Sciatic nerve (tissue), 2 donors: ENCODE measurements at regions of chr9 and their contacts with region 1.

Region 1: DNA sequence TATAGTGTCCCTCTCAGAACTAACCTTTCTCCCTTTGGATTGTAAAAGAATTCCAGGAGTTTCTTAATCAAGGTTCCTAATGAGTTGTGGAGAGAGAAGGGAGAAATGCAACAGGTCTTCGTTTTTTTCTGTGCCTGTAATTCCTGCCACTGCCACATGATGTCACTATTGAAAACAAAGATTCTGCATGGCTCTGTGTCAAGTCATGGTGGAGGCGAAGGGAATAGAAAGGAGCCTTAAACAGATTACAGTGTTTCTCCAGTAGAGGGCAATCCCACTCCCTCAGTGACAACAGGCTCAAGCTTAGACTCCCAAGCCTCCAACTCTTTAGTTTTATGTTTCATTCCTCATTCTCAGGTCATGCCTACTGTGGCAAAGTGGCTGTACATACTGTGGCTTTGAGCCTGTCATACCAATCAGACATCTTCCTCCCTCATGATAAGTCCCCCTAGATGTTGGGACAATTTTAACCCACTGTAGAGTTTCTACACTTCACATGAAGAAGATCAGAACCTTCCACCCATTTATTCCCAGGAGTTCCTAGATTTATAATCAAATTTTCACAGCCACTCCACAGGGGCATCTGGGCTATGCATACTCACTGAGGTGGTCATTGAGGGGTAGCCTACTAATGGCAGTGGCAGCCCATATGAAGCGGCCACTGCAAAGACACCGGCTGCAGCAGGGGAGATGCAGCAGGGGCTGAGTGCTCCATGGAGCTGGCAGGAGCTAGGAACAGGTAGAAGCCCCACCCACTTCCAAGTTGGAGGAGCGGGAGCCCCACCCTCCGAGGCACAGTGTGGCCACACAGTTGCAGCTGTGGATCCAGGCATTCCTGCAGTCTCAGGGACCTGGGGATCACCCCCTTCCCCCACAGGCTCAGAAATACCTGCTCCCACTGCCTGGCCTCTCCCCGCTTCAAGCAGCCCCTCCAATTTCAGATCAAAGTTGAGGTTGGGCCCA is 97.4 kb upstream of the TRIM32 start:
- DNase-seq: no peak
- ATAC-seq: peak; percentile 45

Region 2: GRCh38 chr9:117354244-117354847 is 764.7 kb after region 1 on chr9:
- intact Hi-C with region 1: no loop called
- DNase-seq: no peak
- ATAC-seq: no peak

Region 3: GRCh38 chr9:118558026-118558425 is 1968.4 kb after region 1 on chr9:
- intact Hi-C with region 1: loop called (anchors 5 kb)
- DNase-seq: no peak
- ATAC-seq: no peak